BJ (cell line): ENCODE measurements at regions of chr11 and their contacts with region 1.

Region 1: GRCh38 chr11:65497141-65498041 is 1.5 kb upstream of the MALAT1 start:
- DNase-seq: peak; percentile 89
- H3K4me3 ChIP-seq: peak overlapping the region; percentile 63
- H3K27me3 ChIP-seq: no peaks in the 10 kb centered on the region
- CTCF ChIP-seq: no peak; the same call in 1 of the 2 replicates

Region 2: GRCh38 chr11:65354265-65355012 is 143.0 kb before region 1 on chr11 and contains the start of gene TIGD3:
- CTCF ChIA-PET with region 1: interaction called, 3 read pairs
- POLR2A ChIA-PET with region 1: interaction called, 11 read pairs
- DNase-seq: peak; percentile 77
- H3K4me3 ChIP-seq: peak within 1 kb of the TSS; percentile 52
- H3K27me3 ChIP-seq: peaks cover 5% of the 10 kb centered on the region
- CTCF ChIP-seq: no peak
- polyA plus RNA-seq, gene TIGD3: 0.04 and 0.06 TPM in 2 replicates

Region 3: DNA sequence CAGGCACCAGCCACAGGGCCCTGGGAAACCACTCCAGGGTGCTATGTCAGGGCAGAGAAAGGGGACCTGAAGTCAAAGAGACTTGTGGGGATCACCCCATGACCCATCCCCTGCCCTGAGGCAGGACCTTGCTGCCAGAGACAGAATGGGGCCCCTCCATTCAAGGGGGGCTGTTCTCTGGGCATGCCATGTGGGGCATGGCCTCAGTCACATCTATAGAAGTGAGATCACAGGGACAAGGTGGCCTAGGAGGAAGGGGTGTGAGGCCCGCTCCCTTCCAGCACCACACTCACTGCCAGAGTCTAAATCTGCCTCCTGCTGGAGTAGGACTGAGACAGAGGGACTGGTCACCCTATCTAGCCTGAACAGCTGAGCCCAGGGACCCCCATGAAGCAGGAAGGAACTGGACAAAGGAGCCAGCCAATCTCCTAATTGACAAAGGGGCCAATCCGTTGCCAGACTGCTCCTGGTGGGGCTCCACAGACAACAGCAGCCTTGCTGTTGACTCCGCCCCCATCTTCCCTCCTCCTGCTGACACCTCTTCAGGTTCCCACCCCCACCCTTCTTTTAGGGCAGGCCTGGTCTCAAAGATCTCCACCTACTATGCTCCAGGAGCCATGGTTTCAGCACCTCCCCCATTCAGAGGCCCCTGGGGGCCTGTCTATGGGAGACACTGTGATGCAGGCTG is 48.8 kb before region 1 on chr11:
- CTCF ChIA-PET with region 1: interaction called, 6 read pairs
- POLR2A ChIA-PET with region 1: interaction called, 36 read pairs
- DNase-seq: no peak
- H3K4me3 ChIP-seq: no peak overlapping the region
- H3K27me3 ChIP-seq: no peaks in the 10 kb centered on the region
- CTCF ChIP-seq: no peak

Region 4: GRCh38 chr11:65471410-65471762 is 26.0 kb before region 1 on chr11:
- CTCF ChIA-PET with region 1: interaction called, 62 read pairs
- POLR2A ChIA-PET with region 1: interaction called, 137 read pairs
- DNase-seq: no peak
- H3K4me3 ChIP-seq: peak overlapping the region; percentile 15
- H3K27me3 ChIP-seq: no peaks in the 10 kb centered on the region
- CTCF ChIP-seq: peak; percentile 58

Region 5: DNA sequence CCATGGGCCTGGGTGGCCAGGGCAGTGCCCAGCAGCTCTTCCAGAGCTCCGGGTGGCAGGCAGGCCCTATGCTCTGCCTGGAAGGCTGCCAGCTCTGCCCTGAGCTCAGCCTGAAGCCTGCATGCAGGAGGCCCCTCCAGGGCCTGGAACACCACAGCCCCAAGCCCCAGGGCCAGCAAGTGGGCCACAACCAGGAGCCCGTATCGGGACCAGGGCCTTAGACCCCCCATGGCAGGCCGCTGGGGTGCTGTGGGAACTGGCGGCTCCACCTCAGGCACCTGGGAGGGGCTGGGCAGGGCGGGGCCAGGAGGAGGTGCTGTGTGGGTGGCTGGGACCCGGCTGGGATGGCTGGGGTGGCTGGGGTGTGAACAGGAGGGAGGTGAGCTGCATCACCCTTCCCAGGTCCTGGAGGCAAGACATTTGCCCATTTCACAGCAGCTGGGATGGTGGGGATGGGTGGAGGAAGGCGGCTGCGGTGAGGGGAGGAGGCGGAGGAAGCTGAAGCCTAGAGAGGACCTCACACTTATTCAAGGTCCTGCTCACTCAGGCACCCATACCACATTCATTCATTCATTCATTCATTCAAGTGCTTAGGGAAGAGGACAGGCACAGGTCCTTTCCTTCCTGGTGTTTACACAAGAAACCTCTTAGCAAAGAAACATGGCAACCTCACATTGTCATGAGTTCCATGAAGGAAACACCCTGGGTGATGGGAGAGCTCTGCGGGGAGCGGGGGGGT is 98.3 kb after region 1 on chr11 and contains the start of gene KCNK7:
- CTCF ChIA-PET with region 1: no interaction called
- POLR2A ChIA-PET with region 1: no interaction called
- DNase-seq: no peak
- H3K4me3 ChIP-seq: no peak within 1 kb of the TSS
- H3K27me3 ChIP-seq: no peaks in the 10 kb centered on the region
- CTCF ChIP-seq: no peak
- polyA plus RNA-seq, gene KCNK7: 0.06 and 0.07 TPM in 2 replicates